Calu3 (cell line): ENCODE measurements at regions of chr2 and their contacts with region 1.

Region 1: DNA sequence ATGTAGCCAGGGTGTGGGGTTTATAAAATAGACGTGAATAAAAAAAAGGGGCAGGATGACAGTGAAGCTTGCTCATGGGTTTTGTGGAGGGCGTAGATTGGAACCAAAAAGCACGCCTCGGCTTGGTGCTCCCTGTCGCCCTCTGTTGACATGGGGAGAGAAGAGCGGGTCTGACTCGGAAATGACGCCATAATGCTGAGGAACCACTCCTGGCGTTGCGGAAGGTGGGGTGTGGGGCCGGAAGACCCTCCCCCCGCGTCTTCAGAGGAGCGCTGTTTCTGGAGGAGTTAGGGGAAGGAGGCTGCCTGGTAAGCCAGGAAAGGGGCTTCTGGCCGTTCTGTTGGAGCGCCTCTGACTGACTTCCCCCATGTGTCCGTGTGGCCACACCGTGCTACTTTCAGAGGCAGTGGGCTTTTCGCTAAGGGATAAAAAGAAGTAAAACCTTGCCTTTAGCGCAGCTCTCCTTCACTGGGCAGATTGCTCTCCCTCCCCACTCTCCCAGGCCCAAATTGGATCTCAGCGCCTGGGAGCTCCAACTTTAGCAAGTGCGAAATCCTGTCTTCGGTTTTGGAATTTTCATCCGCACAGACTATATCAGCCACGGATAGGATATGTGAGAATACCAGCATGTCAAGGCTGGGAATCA is 42.8 kb downstream of the PLEKHA3 start:
- DNase-seq: peak; percentile 89
- H3K4me3 Mint-ChIP-seq: peak overlapping the region; percentile 92
- H3K27ac Mint-ChIP-seq: peak overlapping the region; percentile 91
- H3K4me1 Mint-ChIP-seq: no peaks in the 10 kb centered on the region
- H3K27me3 Mint-ChIP-seq: no peaks in the 10 kb centered on the region
- CTCF ChIP-seq: peak; percentile 90

Region 2: GRCh38 chr2:178450774-178451525 is 72.1 kb before region 1 on chr2 and contains the starts of genes PJVK and PRKRA:
- CTCF ChIA-PET with region 1: no interaction called
- intact Hi-C with region 1: loop called (anchors 2 kb)
- DNase-seq: peak; percentile 99
- H3K4me3 Mint-ChIP-seq: peak within 1 kb of the TSS; percentile 90
- H3K27ac Mint-ChIP-seq: peak within 1 kb of the TSS; percentile 99
- H3K4me1 Mint-ChIP-seq: peaks cover 21% of the 10 kb centered on the region
- H3K27me3 Mint-ChIP-seq: no peaks in the 10 kb centered on the region
- CTCF ChIP-seq: no peak
- total RNA-seq, gene PJVK: 2.6 and 4.3 TPM in 2 replicates
- total RNA-seq, gene PRKRA: 50.0 and 53.2 TPM in 2 replicates

Region 3: DNA sequence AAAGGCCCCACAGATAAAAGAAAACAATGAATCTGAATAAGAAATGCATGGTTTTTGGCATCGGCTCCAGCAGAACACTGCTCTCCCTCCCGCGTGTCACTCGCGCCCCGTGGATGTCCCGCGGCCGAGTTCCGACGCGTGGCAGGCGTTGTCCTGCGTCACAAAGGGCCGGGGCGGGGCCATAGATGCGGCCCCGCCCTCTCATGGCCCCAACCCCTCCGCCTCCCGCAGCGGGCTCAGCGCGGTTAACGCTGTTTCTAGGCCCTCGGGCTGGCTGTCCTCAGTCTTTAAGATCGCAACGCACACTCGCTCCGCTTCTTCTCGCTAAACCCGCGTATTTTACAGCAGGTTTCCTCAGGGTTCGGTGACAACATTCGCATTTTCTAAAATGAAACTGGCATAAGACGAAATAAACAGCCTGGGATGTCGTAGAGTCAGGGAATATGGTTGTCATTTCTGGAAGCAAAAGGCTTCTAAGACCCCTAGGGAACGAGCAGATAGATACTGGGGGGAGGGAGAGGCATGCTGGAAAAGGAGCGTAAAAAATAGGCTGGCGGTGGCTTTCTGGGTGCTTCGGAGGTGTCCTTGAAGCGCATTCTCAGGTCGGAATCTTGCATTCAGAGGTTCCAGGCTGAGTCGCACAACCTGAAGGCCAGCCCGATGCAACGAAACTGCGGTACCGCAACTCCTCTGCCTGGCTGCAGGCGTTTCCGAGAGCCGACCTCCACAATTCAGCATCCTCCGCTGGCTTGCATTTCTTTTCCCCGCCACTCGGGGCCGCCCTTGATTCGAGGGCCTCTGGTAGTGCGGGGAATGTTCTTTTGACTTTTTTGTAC is 44.4 kb before region 1 on chr2 and contains the start of gene FKBP7:
- CTCF ChIA-PET with region 1: interaction called, 4 read pairs
- intact Hi-C with region 1: loop called (anchors 2 kb)
- DNase-seq: peak; percentile 85
- H3K4me3 Mint-ChIP-seq: peak within 1 kb of the TSS; percentile 94
- H3K27ac Mint-ChIP-seq: peak within 1 kb of the TSS; percentile 89
- H3K4me1 Mint-ChIP-seq: peaks cover 22% of the 10 kb centered on the region
- H3K27me3 Mint-ChIP-seq: no peaks in the 10 kb centered on the region
- CTCF ChIP-seq: peak; percentile 75
- total RNA-seq, gene FKBP7: 8.8 and 8.9 TPM in 2 replicates